ENCODE measurements at regions of chr17 and their contacts with region 1.

Region 1: DNA sequence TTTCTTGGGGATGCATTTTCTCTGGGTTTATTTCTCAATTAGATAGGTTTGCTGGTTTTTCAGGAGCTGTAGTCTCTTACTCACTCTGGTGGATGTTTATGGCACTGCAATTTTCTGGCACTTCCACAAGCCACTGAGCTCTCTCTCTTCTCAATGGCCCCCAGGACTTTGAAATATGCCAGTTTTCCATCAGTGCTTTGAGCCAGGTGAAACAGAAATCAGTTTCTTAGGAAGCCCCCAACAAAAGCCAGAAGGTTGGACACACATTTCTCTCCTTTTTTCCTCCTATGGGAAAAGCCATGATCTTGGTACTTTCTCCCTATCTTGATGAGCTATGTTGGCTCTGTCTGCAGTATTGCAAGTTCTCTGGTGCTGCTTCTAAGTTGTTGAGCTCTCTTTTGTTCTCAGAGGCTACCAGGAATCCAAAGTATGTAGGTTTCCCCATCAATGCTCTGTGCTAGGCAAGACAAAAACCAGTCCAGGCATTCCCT is 90.7 kb upstream of the SMIM36 start:
- DNase-seq: peak; percentile 77
- ATAC-seq: peak; percentile 76
- H3K4me3 ChIP-seq: no peak overlapping the region
- H3K27ac ChIP-seq: no peak overlapping the region
- H3K4me1 ChIP-seq: peaks cover 5% of the 10 kb centered on the region; the same call in 1 of the 2 replicates
- H3K27me3 ChIP-seq: peaks cover 19% of the 10 kb centered on the region
- CTCF ChIP-seq: peak; percentile 93

Region 2: GRCh38 chr17:55383771-55384642 is 217.9 kb before region 1 on chr17:
- CTCF ChIA-PET with region 1: no interaction called
- POLR2A ChIA-PET with region 1: no interaction called
- intact Hi-C with region 1: no loop called
- DNase-seq: no peak
- ATAC-seq: no peak
- H3K4me3 ChIP-seq: no peak overlapping the region
- H3K27ac ChIP-seq: no peak overlapping the region
- H3K4me1 ChIP-seq: no peaks in the 10 kb centered on the region
- H3K27me3 ChIP-seq: 0 out of 2 replicates have a peak, but pooled peaks cover 4% of the 10 kb centered on the region
- CTCF ChIP-seq: no peak

Region 3: GRCh38 chr17:55555772-55556171 is 46.1 kb before region 1 on chr17:
- CTCF ChIA-PET with region 1: no interaction called
- POLR2A ChIA-PET with region 1: no interaction called
- intact Hi-C with region 1: no loop called
- DNase-seq: no peak
- ATAC-seq: no peak
- H3K4me3 ChIP-seq: no peak overlapping the region
- H3K27ac ChIP-seq: no peak overlapping the region
- H3K4me1 ChIP-seq: no peaks in the 10 kb centered on the region
- H3K27me3 ChIP-seq: peaks cover 52% of the 10 kb centered on the region
- CTCF ChIP-seq: no peak

Region 4: GRCh38 chr17:55641676-55642081 is 39.8 kb after region 1 on chr17:
- CTCF ChIA-PET with region 1: interaction called, 11 read pairs
- POLR2A ChIA-PET with region 1: no interaction called
- intact Hi-C with region 1: no loop called
- DNase-seq: peak; percentile 74
- ATAC-seq: peak; percentile 86
- H3K4me3 ChIP-seq: no peak overlapping the region
- H3K27ac ChIP-seq: no peak overlapping the region
- H3K4me1 ChIP-seq: no peaks in the 10 kb centered on the region
- H3K27me3 ChIP-seq: peaks cover 74% of the 10 kb centered on the region
- CTCF ChIP-seq: peak; percentile 88

Region 5: GRCh38 chr17:55770148-55770870 is 168.4 kb after region 1 on chr17:
- CTCF ChIA-PET with region 1: interaction called, 6 read pairs
- POLR2A ChIA-PET with region 1: no interaction called
- intact Hi-C with region 1: loop called (anchors 1 kb)
- DNase-seq: peak; percentile 86
- ATAC-seq: peak; percentile 89
- H3K4me3 ChIP-seq: no peak overlapping the region
- H3K27ac ChIP-seq: no peak overlapping the region; the same call in 1 of the 2 replicates
- H3K4me1 ChIP-seq: peaks cover 15% of the 10 kb centered on the region
- H3K27me3 ChIP-seq: no peaks in the 10 kb centered on the region
- CTCF ChIP-seq: peak; percentile 84

Region 6: DNA sequence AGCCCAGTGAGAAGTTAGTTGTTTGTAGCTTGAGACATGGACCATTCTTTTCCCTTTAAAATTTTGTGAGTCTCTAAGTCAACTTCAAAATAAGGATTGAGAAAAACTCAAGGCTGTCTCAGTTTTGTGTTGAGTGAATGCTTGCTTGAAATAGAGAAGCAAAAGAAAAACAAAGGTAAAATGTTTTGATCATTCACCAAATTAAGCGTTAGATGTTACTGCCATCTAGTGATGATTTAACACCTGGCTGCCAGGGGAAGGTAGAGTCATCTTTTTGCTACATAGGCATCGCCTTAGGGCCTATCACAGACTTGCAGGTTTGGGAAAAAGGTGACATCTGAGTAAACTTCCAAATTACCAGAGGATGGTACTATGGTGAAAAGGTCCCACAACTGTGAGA is 223.3 kb after region 1 on chr17:
- CTCF ChIA-PET with region 1: no interaction called
- POLR2A ChIA-PET with region 1: no interaction called
- intact Hi-C with region 1: loop called (anchors 1 kb)
- DNase-seq: peak; percentile 55
- ATAC-seq: peak; percentile 70
- H3K4me3 ChIP-seq: no peak overlapping the region
- H3K27ac ChIP-seq: no peak overlapping the region
- H3K4me1 ChIP-seq: no peaks in the 10 kb centered on the region
- H3K27me3 ChIP-seq: peaks cover 67% of the 10 kb centered on the region
- CTCF ChIP-seq: peak; percentile 80

Measured in PC-3 (cell line).